AG04450 (cell line): ENCODE measurements at regions of chr6 and their contacts with region 1.

Region 1: DNA sequence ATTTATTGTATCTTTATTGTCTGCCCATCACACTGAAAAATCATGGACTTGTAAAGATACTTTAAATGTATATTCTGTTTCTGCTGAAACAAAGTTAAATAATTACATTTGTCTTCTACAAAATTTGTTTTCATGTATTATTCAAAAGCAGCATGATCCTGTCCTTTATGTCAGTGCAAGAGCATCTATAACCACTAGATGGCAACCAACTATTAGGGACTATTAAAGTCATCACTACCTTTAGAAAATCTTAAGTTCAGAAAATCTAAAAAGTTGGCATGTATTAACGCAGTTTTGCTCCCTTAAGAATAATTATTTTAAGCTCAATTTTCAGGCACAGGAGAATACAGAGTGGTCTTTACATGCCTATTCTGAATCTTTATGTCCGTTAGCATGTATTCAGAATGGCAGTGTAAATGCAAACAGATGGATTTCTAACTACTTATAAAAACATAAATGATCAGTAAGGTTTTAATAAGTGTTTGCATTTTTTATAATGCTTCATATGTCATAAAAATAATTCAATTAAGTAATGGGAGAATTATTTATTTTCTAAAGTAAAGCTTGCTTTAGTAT is 17.8 kb downstream of the TMEM30A start:
- DNase-seq: no peak
- H3K4me3 ChIP-seq: no peak overlapping the region
- H3K27ac ChIP-seq: no peak overlapping the region
- H3K27me3 ChIP-seq: no peaks in the 10 kb centered on the region
- CTCF ChIP-seq: peak; percentile 86

Region 2: GRCh38 chr6:75243333-75244062 is 23.3 kb before region 1 on chr6 and contains the start of gene COX7A2:
- CTCF ChIA-PET with region 1: interaction called, 12 read pairs
- POLR2A ChIA-PET with region 1: no interaction called
- DNase-seq: peak; percentile 96
- H3K4me3 ChIP-seq: peak within 1 kb of the TSS; percentile 95
- H3K27ac ChIP-seq: peak within 1 kb of the TSS; percentile 91
- H3K27me3 ChIP-seq: no peaks in the 10 kb centered on the region
- CTCF ChIP-seq: no peak
- polyA plus RNA-seq, gene COX7A2: 235 and 263 TPM in 2 replicates

Region 3: GRCh38 chr6:75249837-75250236 is 17.0 kb before region 1 on chr6:
- CTCF ChIA-PET with region 1: interaction called, 36 read pairs
- POLR2A ChIA-PET with region 1: no interaction called
- DNase-seq: no peak
- H3K4me3 ChIP-seq: no peak overlapping the region
- H3K27ac ChIP-seq: no peak overlapping the region
- H3K27me3 ChIP-seq: no peaks in the 10 kb centered on the region
- CTCF ChIP-seq: no peak

Region 4: DNA sequence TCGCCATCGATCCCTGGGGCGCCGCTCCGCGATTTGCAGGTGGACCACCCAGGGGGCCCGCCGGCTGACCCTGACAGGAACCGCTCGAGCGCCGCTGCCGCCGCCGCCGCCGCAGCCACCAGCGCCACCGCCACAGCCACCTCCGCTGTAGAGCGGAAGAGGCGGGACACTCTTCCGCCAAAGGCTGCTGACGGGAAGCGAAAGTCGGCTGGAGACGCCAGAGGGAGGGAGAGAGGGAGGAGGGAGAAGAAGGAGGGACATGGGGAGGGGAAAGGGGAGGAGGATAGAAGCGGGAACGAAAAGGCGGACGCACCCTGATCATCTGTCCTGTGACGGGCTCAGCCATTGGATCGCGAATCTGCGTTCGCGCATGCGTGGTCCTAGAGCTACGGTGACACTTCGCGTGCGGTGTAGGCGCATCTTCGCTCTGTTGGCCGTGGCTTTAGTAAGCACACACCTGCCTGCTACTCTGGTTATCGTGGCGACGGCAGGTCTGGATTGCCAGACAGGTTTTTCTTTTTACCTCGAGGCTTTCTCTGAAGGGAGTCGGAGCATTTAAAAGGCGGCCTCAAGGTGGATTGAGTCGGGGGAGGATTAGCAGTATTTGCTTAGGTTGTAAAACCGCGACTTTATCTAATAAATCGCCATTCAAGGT is 18.0 kb after region 1 on chr6 and contains the start of gene TMEM30A:
- CTCF ChIA-PET with region 1: interaction called, 62 read pairs
- POLR2A ChIA-PET with region 1: no interaction called
- DNase-seq: peak; percentile 98
- H3K4me3 ChIP-seq: peak within 1 kb of the TSS; percentile 96
- H3K27ac ChIP-seq: peak within 1 kb of the TSS; percentile 68
- H3K27me3 ChIP-seq: no peaks in the 10 kb centered on the region
- CTCF ChIP-seq: no peak
- polyA plus RNA-seq, gene TMEM30A: 65.6 and 75.0 TPM in 2 replicates

Region 5: DNA sequence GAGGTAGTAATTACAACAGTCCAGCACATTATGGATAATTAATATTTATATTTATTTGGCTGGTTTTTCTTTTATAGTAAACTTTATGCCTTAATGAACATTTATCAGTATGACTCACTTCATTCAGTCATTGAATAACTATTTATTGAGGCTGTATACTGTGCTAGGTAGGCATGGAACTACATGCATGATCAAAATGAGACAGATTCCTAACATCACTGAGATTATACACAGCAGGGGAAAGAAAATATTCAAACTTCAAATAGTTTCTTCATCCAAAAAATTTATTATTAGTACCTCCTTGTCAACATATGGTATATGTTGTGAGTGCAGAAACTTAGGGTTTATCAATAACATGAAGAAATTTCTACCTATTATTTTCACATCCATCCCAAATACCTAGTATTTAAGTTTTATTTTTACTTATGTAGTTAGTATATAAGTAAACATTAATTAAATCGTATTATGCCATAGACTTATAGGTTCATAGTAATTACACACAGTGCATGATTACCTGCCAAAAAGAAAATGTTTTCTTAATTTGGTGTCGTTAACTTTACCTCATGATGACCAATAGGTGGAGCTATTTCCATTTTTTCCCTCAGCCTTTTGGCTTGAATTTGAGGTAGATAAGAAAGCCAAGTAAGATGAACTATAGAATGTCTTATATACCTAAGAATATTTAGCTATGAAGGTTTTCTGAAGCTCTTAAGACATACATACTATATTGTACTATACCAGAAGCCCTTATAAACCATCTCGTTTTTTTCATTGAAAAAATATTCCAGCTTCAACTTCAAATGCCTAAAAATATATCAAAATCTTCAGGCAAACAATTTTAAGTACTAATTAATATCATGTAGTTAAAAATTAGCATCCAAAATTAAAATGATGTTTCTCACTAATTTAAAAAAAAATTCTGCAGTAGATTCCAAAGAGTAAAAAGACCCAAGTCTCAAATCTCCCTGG is 30.3 kb after region 1 on chr6:
- CTCF ChIA-PET with region 1: interaction called, 17 read pairs
- POLR2A ChIA-PET with region 1: no interaction called
- DNase-seq: no peak
- H3K4me3 ChIP-seq: no peak overlapping the region
- H3K27ac ChIP-seq: no peak overlapping the region
- H3K27me3 ChIP-seq: no peaks in the 10 kb centered on the region
- CTCF ChIP-seq: peak; percentile 73

Region 6: DNA sequence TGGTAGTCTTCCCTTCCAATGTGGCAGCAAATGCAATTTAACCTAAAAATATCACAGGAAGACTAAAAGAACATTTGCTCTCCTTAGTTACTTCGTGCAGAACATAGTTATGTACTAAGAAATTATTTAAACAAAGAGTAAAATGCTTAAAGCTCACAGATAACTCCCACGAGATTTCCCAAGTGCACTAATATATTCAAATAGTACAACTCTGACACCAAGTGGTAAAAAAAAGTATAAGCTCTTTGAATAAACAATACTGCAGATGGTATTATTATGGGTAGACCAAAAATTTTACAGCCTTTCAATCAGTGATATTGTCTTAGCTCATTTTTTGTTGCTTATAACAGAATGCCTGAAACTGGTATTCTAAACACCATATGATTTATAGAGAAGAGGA is 279.6 kb after region 1 on chr6:
- CTCF ChIA-PET with region 1: interaction called, 49 read pairs
- POLR2A ChIA-PET with region 1: interaction called, 3 read pairs
- DNase-seq: no peak
- H3K4me3 ChIP-seq: no peak overlapping the region
- H3K27ac ChIP-seq: no peak overlapping the region
- H3K27me3 ChIP-seq: no peaks in the 10 kb centered on the region
- CTCF ChIP-seq: peak; percentile 31

Region 7: DNA sequence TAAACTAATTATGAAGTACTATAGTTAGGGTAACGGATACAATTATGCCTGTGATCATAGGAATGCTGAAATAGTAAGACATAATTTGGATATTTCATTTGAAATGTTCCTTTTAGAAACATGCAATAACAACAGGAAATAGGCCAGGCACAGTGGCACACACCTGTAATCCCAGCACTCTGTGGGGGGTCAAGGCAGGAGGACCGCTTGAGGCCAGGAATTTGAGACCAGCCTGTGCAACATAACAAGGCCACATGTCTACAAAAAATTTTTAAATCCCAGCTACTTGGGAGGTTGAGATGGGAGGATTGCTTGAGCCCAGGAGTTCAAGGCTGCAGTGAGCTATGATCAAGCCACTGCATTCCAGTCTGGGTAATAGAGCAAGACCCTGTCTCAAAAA is 456.6 kb after region 1 on chr6:
- CTCF ChIA-PET with region 1: interaction called, 11 read pairs
- POLR2A ChIA-PET with region 1: no interaction called
- DNase-seq: no peak
- H3K4me3 ChIP-seq: no peak overlapping the region
- H3K27ac ChIP-seq: no peak overlapping the region
- H3K27me3 ChIP-seq: no peaks in the 10 kb centered on the region
- CTCF ChIP-seq: no peak